Gastrocnemius medialis (tissue), 4 donors: ENCODE measurements at regions of chr18 and their contacts with region 1.

Region 1: GRCh38 chr18:50374753-50375391 is at the start of gene SKA1:
- DNase-seq: peak; percentile 79 to 85
- ATAC-seq: peak; percentile 98 to 99
- H3K4me3 ChIP-seq: peak within 1 kb of the TSS; percentile 52 to 60 (median 56)
- H3K27ac ChIP-seq: peak within 1 kb of the TSS; percentile 70 to 77 (median 74)
- H3K4me1 ChIP-seq: peaks cover 7 to 8% of the 10 kb centered on the region in 2 donors
- H3K27me3 ChIP-seq: no peaks in the 10 kb centered on the region
- CTCF ChIP-seq: no peak
- POLR2A ChIP-seq: peak; percentile 43 to 60
- total RNA-seq, gene SKA1: 0.15 to 0.16 TPM in 2 of 4 donors, not detected in the others

Region 2: GRCh38 chr18:50281295-50281971 is 93.4 kb before region 1 on chr18 and contains the start of gene MBD1:
- in situ Hi-C with region 1: no loop called
- intact Hi-C with region 1: loop called (anchors 2 kb)
- DNase-seq: peak; percentile 96 to 97
- ATAC-seq: peak; percentile 96 to 97
- H3K4me3 ChIP-seq: peak within 1 kb of the TSS; percentile 74 to 99 (median 90)
- H3K27ac ChIP-seq: peak within 1 kb of the TSS; percentile 88 to 95 (median 92)
- H3K4me1 ChIP-seq: peaks cover 18 to 24% of the 10 kb centered on the region in 2 donors
- H3K27me3 ChIP-seq: no peaks in the 10 kb centered on the region
- CTCF ChIP-seq: peak in 3 of 5 experiments; percentile 31 to 50 (median 35)
- POLR2A ChIP-seq: peak; percentile 85 to 93
- total RNA-seq, gene MBD1: 80.4 to 127 (median 103) TPM

Region 3: GRCh38 chr18:50307738-50308470 is 67.0 kb before region 1 on chr18:
- in situ Hi-C with region 1: no loop called
- intact Hi-C with region 1: loop called (anchors 2 kb)
- DNase-seq: peak; percentile 70 to 82
- ATAC-seq: peak; percentile 97 to 99
- H3K4me3 ChIP-seq: peak overlapping the region; percentile 41 to 58 (median 53)
- H3K27ac ChIP-seq: peak overlapping the region in 2 of 4 donors; percentile 21 to 62
- H3K4me1 ChIP-seq: peaks cover 3 to 6% of the 10 kb centered on the region in 2 donors
- H3K27me3 ChIP-seq: peaks cover 0 to 23% (median 2%) of the 10 kb centered on the region in 3 donors
- CTCF ChIP-seq: no peak
- POLR2A ChIP-seq: no peak

Region 4: DNA sequence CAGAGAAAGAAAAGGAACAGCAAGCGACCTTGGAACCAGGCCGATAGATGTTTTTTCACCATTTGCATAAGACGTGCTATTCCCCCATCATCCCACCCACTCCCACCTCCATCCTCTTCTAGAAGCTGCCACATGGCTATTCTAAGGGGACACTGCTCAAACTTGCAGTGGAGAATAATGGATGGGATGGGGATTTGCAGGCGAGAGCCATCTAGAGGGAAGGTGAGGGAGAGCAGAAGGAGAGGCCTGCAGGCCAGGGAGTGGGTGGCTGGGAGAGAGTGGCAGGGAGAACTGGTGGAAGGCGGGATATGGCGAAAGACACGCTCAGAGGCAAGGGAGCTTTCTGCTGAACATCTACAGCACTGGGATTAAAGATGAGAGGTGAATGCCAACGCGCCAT is 269.9 kb after region 1 on chr18:
- in situ Hi-C with region 1: no loop called
- intact Hi-C with region 1: no loop called
- DNase-seq: no peak
- ATAC-seq: no peak
- H3K4me3 ChIP-seq: no peak overlapping the region
- H3K27ac ChIP-seq: no peak overlapping the region
- H3K4me1 ChIP-seq: peaks cover 0 to 3% of the 10 kb centered on the region in 2 donors
- H3K27me3 ChIP-seq: no peaks in the 10 kb centered on the region
- CTCF ChIP-seq: no peak
- POLR2A ChIP-seq: no peak